ENCODE measurements at regions of chr5 and their contacts with region 1.

Region 1: DNA sequence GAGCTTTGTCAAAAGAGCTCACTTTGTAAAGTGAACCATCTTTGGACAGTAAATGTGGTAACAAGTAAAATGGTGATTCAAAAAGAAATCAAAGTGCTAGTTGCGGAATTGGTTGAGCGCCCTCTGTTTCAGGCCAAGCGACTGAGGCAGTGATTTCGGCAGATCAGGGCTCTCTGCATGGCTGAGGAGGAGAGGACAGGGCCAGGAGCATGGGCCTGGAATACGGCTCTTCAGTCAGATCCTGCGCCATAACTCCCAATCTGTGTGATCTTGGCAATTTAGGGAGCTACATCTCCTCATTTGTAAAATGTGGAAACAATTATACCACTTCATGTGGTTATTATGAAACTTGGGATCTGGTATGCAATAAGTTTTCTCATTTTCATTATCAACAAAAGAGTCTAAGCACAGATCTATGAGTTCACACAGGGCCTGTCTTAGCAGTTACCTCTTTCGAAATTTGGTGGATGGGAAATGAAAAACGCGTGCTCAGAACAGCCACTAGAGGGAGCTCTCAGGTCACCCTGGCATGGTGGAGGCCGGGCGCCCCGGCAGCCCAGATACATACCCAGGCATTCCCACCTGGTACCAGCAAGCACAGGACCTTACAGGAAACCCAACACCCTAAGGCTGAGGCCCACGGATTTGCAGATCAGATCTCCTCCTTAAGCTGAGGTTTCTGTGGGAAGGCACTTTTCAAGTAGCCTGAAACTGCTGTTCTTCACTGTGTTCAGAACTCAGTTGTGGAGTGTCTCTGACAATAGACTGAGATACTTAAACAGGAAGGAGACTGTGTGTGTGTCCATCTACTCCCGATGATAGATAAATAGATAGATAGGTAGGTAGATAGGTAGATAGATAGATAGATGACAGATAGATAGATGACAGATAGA is 303.7 kb downstream of the RAB3C start:
- DNase-seq: peak; percentile 83
- ATAC-seq: peak; percentile 66
- H3K4me3 Mint-ChIP-seq: peak overlapping the region; percentile 3
- H3K27ac Mint-ChIP-seq: peak overlapping the region; percentile 83
- H3K4me1 Mint-ChIP-seq: peaks cover 41% of the 10 kb centered on the region
- H3K27me3 Mint-ChIP-seq: peaks cover 2% of the 10 kb centered on the region

Region 2: DNA sequence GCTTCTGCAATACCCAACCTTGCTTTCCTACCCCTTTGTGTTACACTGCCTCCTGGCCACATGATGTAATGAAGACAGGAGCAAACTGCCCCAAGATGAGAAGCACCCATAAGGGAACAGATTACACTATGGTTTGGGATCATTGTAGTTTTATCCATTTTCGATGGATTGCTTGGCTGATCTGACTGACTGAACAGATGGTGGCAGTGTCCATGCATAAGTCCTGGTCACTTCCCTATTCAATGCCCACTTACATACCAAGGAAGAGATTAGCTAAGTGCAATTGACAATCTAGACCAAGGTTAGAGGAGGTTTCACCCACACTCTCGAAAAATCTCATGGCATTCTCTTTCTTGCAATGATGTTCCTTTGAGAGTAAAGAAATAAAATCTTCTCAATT is 16.2 kb after region 1 on chr5:
- CTCF ChIA-PET with region 1: interaction called, 12 read pairs
- POLR2A ChIA-PET with region 1: no interaction called
- intact Hi-C with region 1: no loop called
- DNase-seq: no peak
- ATAC-seq: no peak
- H3K4me3 Mint-ChIP-seq: no peak overlapping the region
- H3K27ac Mint-ChIP-seq: no peak overlapping the region
- H3K4me1 Mint-ChIP-seq: peaks cover 2% of the 10 kb centered on the region
- H3K27me3 Mint-ChIP-seq: peaks cover 5% of the 10 kb centered on the region

Region 3: DNA sequence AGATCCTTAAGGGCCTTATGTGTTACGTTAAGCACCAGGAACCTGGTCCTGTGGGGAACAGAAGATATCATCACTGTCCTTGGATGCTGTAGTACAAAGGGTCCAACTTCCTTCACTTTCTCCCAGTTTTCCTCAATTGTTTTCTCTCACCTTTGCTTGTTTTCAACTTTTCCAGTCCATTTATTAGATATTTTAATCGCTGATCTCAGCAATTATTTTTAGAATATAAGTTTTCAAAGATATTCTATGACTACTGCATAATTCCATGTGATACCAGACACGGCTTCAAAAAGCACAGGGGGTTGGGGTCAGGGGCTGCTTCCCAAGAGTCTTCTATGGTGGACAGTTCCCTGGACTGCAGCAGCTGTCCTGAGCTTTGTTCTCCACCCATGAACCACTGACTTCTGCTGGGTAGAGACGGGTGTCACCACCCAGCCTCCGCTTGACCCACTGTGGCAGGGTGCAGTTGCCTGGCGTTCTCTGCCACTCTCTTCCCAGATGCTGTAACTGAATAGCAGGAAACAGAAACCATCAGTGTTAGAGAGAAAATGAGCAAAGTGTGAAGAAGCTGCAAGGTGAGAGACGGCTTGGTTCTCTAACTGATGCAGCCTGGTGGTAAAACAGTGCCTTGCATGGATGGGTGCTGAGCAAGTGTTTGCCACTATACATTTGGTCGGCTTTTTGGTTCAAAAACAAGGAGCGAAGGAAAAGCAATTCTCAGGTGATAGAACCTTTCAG is 79.3 kb after region 1 on chr5:
- CTCF ChIA-PET with region 1: interaction called, 10 read pairs
- POLR2A ChIA-PET with region 1: no interaction called
- intact Hi-C with region 1: loop called (anchors 2 kb)
- DNase-seq: peak; percentile 16
- ATAC-seq: no peak
- H3K4me3 Mint-ChIP-seq: no peak overlapping the region
- H3K27ac Mint-ChIP-seq: no peak overlapping the region
- H3K4me1 Mint-ChIP-seq: peaks cover 11% of the 10 kb centered on the region
- H3K27me3 Mint-ChIP-seq: no peaks in the 10 kb centered on the region

Region 4: GRCh38 chr5:59020611-59021285 is 134.2 kb after region 1 on chr5:
- CTCF ChIA-PET with region 1: interaction called, 3 read pairs
- POLR2A ChIA-PET with region 1: interaction called, 4 read pairs
- intact Hi-C with region 1: loop called (anchors 1 to 5 kb)
- DNase-seq: peak; percentile 70
- ATAC-seq: peak; percentile 94
- H3K4me3 Mint-ChIP-seq: peak overlapping the region; percentile 47
- H3K27ac Mint-ChIP-seq: peak overlapping the region; percentile 94
- H3K4me1 Mint-ChIP-seq: peaks cover 65% of the 10 kb centered on the region
- H3K27me3 Mint-ChIP-seq: no peaks in the 10 kb centered on the region

Region 5: GRCh38 chr5:59174248-59174844 is 287.8 kb after region 1 on chr5:
- CTCF ChIA-PET with region 1: interaction called, 49 read pairs
- POLR2A ChIA-PET with region 1: no interaction called
- intact Hi-C with region 1: loop called (anchors 1 kb)
- DNase-seq: peak; percentile 47
- ATAC-seq: peak; percentile 72
- H3K4me3 Mint-ChIP-seq: no peak overlapping the region
- H3K27ac Mint-ChIP-seq: no peak overlapping the region
- H3K4me1 Mint-ChIP-seq: peaks cover 16% of the 10 kb centered on the region
- H3K27me3 Mint-ChIP-seq: no peaks in the 10 kb centered on the region

Region 6: DNA sequence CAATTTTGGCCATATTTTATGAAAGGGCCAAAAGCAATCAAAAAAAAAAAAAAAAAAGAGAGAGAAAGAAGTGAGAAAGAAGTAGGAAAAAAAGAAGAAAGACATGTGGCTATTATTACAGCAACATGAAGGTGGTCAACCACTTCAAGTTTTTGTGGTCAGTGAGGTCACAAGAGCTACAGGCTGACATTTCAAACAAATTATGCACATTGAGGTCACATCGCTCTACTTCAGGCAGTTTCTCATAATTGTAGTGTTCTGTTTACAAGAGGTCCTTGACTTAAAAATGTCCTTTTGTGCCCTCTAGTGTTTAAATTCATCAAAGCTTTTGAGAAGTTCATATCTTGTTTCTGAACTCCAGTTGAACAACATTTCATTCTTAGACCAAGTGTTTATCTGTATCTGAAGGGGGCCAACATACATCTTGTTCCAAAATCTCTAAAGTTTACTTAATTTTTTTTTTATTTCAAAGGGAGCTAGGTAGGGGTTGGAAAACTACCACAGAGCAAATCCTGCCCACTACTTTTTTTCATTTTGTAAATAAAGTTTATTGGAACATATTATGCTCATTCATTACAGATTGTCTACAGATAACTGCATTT is 493.9 kb after region 1 on chr5:
- CTCF ChIA-PET with region 1: interaction called, 3 read pairs
- POLR2A ChIA-PET with region 1: no interaction called
- intact Hi-C with region 1: loop called (anchors 1 to 5 kb)
- DNase-seq: peak; percentile 26
- ATAC-seq: peak; percentile 87
- H3K4me3 Mint-ChIP-seq: no peak overlapping the region
- H3K27ac Mint-ChIP-seq: no peak overlapping the region
- H3K4me1 Mint-ChIP-seq: no peaks in the 10 kb centered on the region
- H3K27me3 Mint-ChIP-seq: no peaks in the 10 kb centered on the region